Activated CD4-positive, alpha-beta memory T cell treated with anti-CD3 and anti-CD28 coated beads, Interleukin-2, amount 10 ng/mL, durations not matched to agents 7 days and 5 days (primary cell): ENCODE measurements at regions of chr9 and their contacts with region 1.

Region 1: GRCh38 chr9:110256380-110257096 is at the start of gene TXN:
- DNase-seq: peak; percentile 91
- H3K4me3 Mint-ChIP-seq: peak within 1 kb of the TSS; percentile 87
- H3K27ac Mint-ChIP-seq: peak within 1 kb of the TSS; percentile 96
- H3K4me1 Mint-ChIP-seq: peaks cover 54% of the 10 kb centered on the region
- H3K27me3 Mint-ChIP-seq: no peaks in the 10 kb centered on the region
- total RNA-seq, gene TXN: 315 TPM

Region 2: DNA sequence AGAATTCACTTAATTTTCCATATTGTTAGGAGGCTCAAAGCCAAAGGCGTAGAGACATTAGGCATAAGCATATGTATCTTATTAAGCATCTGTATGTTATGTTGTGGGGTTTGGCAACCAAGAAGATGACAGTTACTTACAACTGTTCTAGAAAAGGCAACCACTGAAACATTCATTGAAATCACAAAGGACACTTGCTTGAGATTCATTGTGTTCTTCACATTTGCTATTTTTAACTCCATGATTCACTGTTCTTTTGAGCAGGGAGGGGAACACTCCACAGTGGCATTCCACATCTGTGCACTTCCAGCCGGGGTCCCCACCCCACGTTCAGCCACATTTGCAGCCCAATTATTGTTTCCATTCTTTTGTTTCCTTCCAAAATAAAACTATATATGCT is 369.5 kb before region 1 on chr9:
- CTCF ChIA-PET with region 1: no interaction called
- POLR2A ChIA-PET with region 1: interaction called, 11 read pairs
- DNase-seq: no peak
- H3K4me3 Mint-ChIP-seq: peak overlapping the region; percentile 31
- H3K27ac Mint-ChIP-seq: peak overlapping the region; percentile 92
- H3K4me1 Mint-ChIP-seq: peaks cover 66% of the 10 kb centered on the region
- H3K27me3 Mint-ChIP-seq: no peaks in the 10 kb centered on the region

Region 3: GRCh38 chr9:110143950-110144545 is 112.5 kb before region 1 on chr9:
- CTCF ChIA-PET with region 1: interaction called, 3 read pairs
- POLR2A ChIA-PET with region 1: interaction called, 15 read pairs
- DNase-seq: peak; percentile 56
- H3K4me3 Mint-ChIP-seq: peak overlapping the region; percentile 57
- H3K27ac Mint-ChIP-seq: peak overlapping the region; percentile 95
- H3K4me1 Mint-ChIP-seq: peaks cover 60% of the 10 kb centered on the region
- H3K27me3 Mint-ChIP-seq: no peaks in the 10 kb centered on the region

Region 4: DNA sequence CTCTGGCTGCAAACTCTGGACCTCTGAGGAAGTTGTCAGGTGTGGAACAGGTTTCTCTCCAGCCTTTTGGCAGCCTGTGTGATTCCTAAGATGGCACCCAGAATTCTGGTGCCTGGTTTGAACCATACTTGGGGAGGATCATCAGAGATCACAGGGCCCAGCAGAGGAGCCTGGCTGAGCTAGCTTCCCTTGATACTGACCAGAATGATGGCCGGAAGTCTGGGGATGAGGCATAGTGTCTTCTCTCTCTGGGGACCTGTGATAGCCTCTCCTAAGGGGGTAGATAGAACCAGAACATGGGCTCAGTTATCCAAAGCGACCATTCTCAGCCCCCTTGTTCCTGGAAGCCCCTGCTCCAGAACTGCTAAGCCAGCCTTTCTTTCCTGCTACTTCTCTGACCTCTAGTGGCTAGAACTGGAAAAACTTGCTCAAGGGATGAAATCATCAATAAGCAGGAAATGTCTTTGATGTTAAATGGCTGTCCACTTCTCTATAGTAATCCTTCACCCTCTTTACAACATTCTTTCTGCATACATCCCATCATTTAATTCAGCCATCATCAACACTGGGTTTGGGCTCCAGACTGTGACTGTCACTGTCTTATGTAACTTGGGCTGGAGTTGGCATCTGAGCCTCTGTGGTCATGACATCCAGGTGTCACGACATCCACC is 103.7 kb before region 1 on chr9:
- CTCF ChIA-PET with region 1: interaction called, 3 read pairs
- POLR2A ChIA-PET with region 1: interaction called, 25 read pairs
- DNase-seq: no peak
- H3K4me3 Mint-ChIP-seq: no peak overlapping the region
- H3K27ac Mint-ChIP-seq: peak overlapping the region; percentile 73
- H3K4me1 Mint-ChIP-seq: peaks cover 91% of the 10 kb centered on the region
- H3K27me3 Mint-ChIP-seq: no peaks in the 10 kb centered on the region

Region 5: DNA sequence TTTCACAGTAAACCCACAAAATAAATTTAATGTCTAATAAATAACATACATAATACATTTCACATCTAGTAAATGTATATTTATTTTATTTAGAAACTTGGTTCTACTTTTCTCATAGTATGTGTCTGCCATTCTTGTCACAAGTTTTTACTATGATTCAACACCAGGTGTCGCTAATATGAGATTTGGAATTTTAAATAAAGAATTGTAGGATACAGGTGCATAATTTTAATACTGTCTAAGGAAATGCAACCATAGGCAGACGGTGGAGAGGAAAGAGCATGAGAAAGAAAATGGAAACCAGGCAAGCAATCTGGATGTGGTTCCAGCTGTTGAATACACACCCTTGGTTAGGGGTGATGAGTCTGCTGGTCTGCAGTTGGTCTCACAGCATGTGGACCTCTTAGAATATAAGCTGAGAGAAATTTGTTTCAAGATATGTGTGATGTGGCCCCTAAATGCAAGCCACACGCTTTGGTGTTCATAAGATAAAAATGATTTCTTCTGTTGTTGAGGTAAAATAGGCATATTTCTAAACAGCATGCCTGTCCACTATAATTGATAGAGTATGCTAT is 195.8 kb after region 1 on chr9:
- CTCF ChIA-PET with region 1: no interaction called
- POLR2A ChIA-PET with region 1: no interaction called
- DNase-seq: no peak
- H3K4me3 Mint-ChIP-seq: no peak overlapping the region
- H3K27ac Mint-ChIP-seq: no peak overlapping the region
- H3K4me1 Mint-ChIP-seq: no peaks in the 10 kb centered on the region
- H3K27me3 Mint-ChIP-seq: no peaks in the 10 kb centered on the region